CD8-positive, alpha-beta T cell (primary cell): ENCODE measurements at regions of chr5 and their contacts with region 1.

Region 1: GRCh38 chr5:158119961-158120723 is 261.2 kb upstream of the CLINT1 start:
- DNase-seq: no peak
- ATAC-seq: no peak
- H3K4me3 ChIP-seq: no peak overlapping the region
- H3K4me3 Mint-ChIP-seq: no peak overlapping the region
- H3K27ac ChIP-seq: no peak overlapping the region
- H3K27ac Mint-ChIP-seq: no peak overlapping the region
- H3K4me1 ChIP-seq: no peaks in the 10 kb centered on the region
- H3K4me1 Mint-ChIP-seq: no peaks in the 10 kb centered on the region
- H3K27me3 ChIP-seq: no peaks in the 10 kb centered on the region
- H3K27me3 Mint-ChIP-seq: peaks cover 21% of the 10 kb centered on the region
- CTCF ChIP-seq: no peak

Region 2: GRCh38 chr5:156686796-156687195 is 1433.3 kb before region 1 on chr5:
- CTCF ChIA-PET with region 1: no interaction called
- POLR2A ChIA-PET with region 1: no interaction called
- intact Hi-C with region 1: loop called in 1 of 2 experiments (anchors 10 kb)
- DNase-seq: no peak
- ATAC-seq: no peak
- H3K4me3 ChIP-seq: no peak overlapping the region
- H3K4me3 Mint-ChIP-seq: no peak overlapping the region
- H3K27ac ChIP-seq: no peak overlapping the region
- H3K27ac Mint-ChIP-seq: no peak overlapping the region
- H3K4me1 ChIP-seq: no peaks in the 10 kb centered on the region
- H3K4me1 Mint-ChIP-seq: no peaks in the 10 kb centered on the region
- H3K27me3 ChIP-seq: peaks cover 0 to 3% of the 10 kb centered on the region in 2 experiments
- H3K27me3 Mint-ChIP-seq: peaks cover 24% of the 10 kb centered on the region
- CTCF ChIP-seq: no peak